Aorta (tissue), 5 donors: ENCODE measurements at regions of chr16 and their contacts with region 1.

Region 1: GRCh38 chr16:8567750-8568617 is 22.3 kb downstream of the TMEM114 start:
- DNase-seq: peak; percentile 81 to 86
- ATAC-seq: peak; percentile 90
- H3K4me3 ChIP-seq: no peak overlapping the region
- H3K27ac ChIP-seq: no peak overlapping the region
- H3K4me1 ChIP-seq: no peaks in the 10 kb centered on the region
- H3K27me3 ChIP-seq: no peaks in the 10 kb centered on the region

Region 2: GRCh38 chr16:8547762-8548161 is 20.2 kb before region 1 on chr16:
- intact Hi-C with region 1: no loop called
- DNase-seq: no peak
- ATAC-seq: no peak
- H3K4me3 ChIP-seq: no peak overlapping the region
- H3K27ac ChIP-seq: no peak overlapping the region
- H3K4me1 ChIP-seq: no peaks in the 10 kb centered on the region
- H3K27me3 ChIP-seq: peaks cover 0 to 4% of the 10 kb centered on the region in 2 donors

Region 3: GRCh38 chr16:8621572-8622314 is 53.8 kb after region 1 on chr16 and contains the start of gene METTL22:
- intact Hi-C with region 1: loop called in 1 of 2 experiments (anchors 5 kb)
- DNase-seq: peak; percentile 94 to 98
- ATAC-seq: peak; percentile 98
- H3K4me3 ChIP-seq: peak within 1 kb of the TSS; percentile 45 to 77
- H3K27ac ChIP-seq: peak within 1 kb of the TSS in 1 of 2 donors; percentile 41
- H3K4me1 ChIP-seq: no peaks in the 10 kb centered on the region
- H3K27me3 ChIP-seq: no peaks in the 10 kb centered on the region
- total RNA-seq, gene METTL22: 39.6 to 42.8 TPM

Region 4: GRCh38 chr16:8660841-8661301 is 92.9 kb after region 1 on chr16:
- intact Hi-C with region 1: loop called in 1 of 2 experiments (anchors 10 kb)
- DNase-seq: peak; percentile 63 to 86
- ATAC-seq: peak; percentile 73
- H3K4me3 ChIP-seq: no peak overlapping the region
- H3K27ac ChIP-seq: no peak overlapping the region
- H3K4me1 ChIP-seq: no peaks in the 10 kb centered on the region
- H3K27me3 ChIP-seq: no peaks in the 10 kb centered on the region

Region 5: GRCh38 chr16:8797364-8798173 is 229.6 kb after region 1 on chr16 and contains the starts of genes PMM2 and TMEM186:
- intact Hi-C with region 1: loop called (anchors 2 to 5 kb)
- DNase-seq: peak; percentile 98
- ATAC-seq: peak; percentile 98
- H3K4me3 ChIP-seq: peak within 1 kb of the TSS; percentile 86 to 94
- H3K27ac ChIP-seq: peak within 1 kb of the TSS in 1 of 2 donors; percentile 45
- H3K4me1 ChIP-seq: peaks cover 0 to 2% of the 10 kb centered on the region in 2 donors
- H3K27me3 ChIP-seq: no peaks in the 10 kb centered on the region
- total RNA-seq, gene PMM2: 43.1 to 48.4 TPM
- total RNA-seq, gene TMEM186: 5.7 to 7.0 TPM

Region 6: GRCh38 chr16:8880839-8881510 is 313.0 kb after region 1 on chr16:
- intact Hi-C with region 1: loop called (anchors 1 to 2 kb)
- DNase-seq: peak in 1 of 2 donors; percentile 9
- ATAC-seq: no peak
- H3K4me3 ChIP-seq: no peak overlapping the region
- H3K27ac ChIP-seq: no peak overlapping the region
- H3K4me1 ChIP-seq: no peaks in the 10 kb centered on the region
- H3K27me3 ChIP-seq: no peaks in the 10 kb centered on the region

Region 7: DNA sequence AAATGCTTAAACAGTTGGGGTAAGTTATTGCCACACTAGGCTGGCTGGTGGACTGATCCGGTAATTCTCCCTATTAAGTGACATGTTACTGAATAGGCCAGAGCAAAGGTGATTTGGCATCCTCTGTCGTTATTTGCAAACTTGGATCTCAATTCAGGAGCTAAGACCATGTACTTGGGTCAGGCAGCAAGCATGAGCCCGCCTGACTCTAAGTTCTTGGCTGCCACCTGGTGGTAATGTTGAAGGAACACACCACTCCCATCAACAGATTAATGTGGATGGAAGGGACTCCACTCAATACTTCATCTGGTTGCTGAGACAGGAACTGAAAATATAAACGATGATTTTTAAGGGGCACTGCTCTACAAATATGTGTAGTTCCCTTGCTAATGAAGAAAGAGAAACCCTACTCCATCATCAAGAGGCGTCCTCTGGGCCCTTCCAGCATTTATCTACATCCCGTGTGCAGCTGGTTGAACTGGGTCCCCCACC is 1941.6 kb after region 1 on chr16:
- intact Hi-C with region 1: loop called in 1 of 2 experiments (anchors 10 kb)
- DNase-seq: peak in 1 of 2 donors; percentile 56
- ATAC-seq: peak; percentile 85
- H3K4me3 ChIP-seq: no peak overlapping the region
- H3K27ac ChIP-seq: no peak overlapping the region
- H3K4me1 ChIP-seq: no peaks in the 10 kb centered on the region
- H3K27me3 ChIP-seq: no peaks in the 10 kb centered on the region